Ascending aorta (tissue), 2 donors: ENCODE measurements at regions of chr3 and their contacts with region 1.

Region 1: DNA sequence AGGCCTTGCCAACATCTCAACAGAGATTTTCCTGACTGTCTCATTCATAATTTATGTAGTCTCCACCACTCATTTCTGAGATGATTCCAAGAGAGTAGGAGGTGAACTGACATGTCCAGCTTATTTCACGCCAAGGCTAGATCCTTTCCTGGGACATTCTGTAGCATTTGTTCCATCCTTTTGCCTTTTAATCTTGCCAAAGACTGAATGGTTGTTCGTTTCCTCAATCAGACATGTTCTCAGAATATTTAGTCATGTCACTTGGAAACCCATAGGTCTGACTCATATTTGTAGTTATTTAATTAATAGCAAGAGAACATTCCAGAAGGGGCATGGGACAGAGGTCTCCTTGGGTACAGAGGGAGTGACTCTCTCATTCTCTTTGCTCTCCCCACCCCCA is 80.9 kb downstream of the DHX36 start:
- DNase-seq: no peak
- H3K4me3 ChIP-seq: no peak overlapping the region
- H3K27ac ChIP-seq: peak overlapping the region; percentile 87 to 88
- H3K4me1 ChIP-seq: peaks cover 4 to 27% of the 10 kb centered on the region in 2 donors
- H3K27me3 ChIP-seq: no peaks in the 10 kb centered on the region
- CTCF ChIP-seq: no peak

Region 2: GRCh38 chr3:154060238-154061000 is 182.9 kb before region 1 on chr3:
- intact Hi-C with region 1: loop called (anchors 2 kb)
- DNase-seq: peak in 1 of 2 donors; percentile 77
- H3K4me3 ChIP-seq: peak overlapping the region in 1 of 2 donors; percentile 30
- H3K27ac ChIP-seq: peak overlapping the region; percentile 70 to 75
- H3K4me1 ChIP-seq: peaks cover 0 to 10% of the 10 kb centered on the region in 2 donors
- H3K27me3 ChIP-seq: no peaks in the 10 kb centered on the region
- CTCF ChIP-seq: no peak

Region 3: DNA sequence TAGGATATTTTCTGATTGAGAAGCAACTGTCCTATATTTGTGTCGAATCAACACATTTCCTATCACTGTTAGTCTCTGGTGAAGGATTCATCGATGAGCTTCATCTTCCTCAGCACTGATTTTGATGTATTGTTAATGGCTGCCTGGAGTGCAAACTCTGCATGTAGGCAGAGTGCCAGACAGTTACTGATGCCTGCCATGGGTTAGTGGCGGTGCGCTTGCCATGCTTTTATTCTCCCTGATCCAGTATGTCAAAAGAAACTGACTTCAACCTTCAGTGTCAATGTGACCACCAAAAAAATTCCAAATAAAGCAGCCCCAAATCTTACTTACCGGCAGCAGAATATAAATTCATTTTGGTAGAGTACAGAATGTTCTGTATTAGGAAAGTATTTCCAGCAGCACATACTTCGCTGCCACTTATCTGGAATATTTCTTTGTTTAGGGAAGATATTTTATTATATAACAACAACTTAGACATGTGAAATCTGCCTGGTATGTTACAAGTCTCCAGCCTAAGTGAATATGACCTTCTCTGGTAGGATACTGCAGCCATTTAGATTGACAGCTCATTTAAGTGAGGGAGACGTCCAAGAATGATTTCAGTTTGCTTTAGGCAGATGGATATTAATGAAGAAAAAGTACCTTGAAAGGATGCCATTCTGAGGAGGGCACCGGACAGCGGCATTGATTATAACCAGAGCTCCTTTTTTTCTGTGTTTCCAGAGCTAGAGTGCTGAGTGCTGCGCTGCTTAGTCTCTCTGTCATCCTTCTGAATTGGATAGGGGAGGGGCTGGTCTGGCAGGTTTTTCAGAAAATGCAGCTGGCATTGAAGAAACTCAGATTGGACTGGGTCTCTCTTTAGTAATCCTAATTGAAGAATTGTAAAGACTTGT is 62.3 kb before region 1 on chr3:
- intact Hi-C with region 1: loop called (anchors 5 kb)
- DNase-seq: no peak
- H3K4me3 ChIP-seq: peak overlapping the region in 1 of 2 donors; percentile 30
- H3K27ac ChIP-seq: peak overlapping the region; percentile 76 to 83
- H3K4me1 ChIP-seq: peaks cover 0 to 19% of the 10 kb centered on the region in 2 donors
- H3K27me3 ChIP-seq: no peaks in the 10 kb centered on the region
- CTCF ChIP-seq: no peak

Region 4: DNA sequence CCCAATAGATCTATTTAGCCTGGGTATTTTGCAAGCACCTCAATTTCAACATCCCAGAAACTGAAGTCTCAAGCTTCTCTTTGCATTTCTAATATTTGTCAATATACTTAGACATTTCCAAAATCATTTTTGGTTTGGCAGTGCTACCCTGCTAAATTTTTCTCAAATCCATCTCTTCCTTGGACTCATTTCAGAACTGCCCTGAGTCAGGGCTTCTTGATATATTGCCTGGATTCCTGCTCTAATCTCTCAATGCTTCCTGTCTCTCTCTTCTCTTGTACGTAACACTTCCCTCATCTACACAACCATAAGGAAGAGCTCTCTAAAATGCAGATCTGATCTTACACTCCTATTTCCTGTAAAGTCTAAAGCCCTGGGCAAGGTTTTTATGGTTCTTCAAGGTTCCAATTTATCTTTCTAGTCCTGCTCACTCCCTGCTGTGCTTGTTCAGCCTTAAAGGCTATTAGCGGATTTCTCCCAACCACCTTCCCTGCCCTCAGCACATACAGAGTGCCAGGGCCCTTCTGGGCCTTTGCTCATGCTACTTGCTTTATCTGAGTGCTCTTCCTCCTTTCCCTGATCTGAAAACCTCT is 783.7 kb after region 1 on chr3:
- intact Hi-C with region 1: no loop called
- DNase-seq: no peak
- H3K4me3 ChIP-seq: no peak overlapping the region
- H3K27ac ChIP-seq: no peak overlapping the region
- H3K4me1 ChIP-seq: no peaks in the 10 kb centered on the region
- H3K27me3 ChIP-seq: no peaks in the 10 kb centered on the region
- CTCF ChIP-seq: no peak